ENCODE measurements at regions of chrX and their contacts with region 1.

Region 1: GRCh38 chrX:24498975-24499374 is 33.9 kb downstream of the PDK3 start:
- DNase-seq: peak; percentile 30
- H3K4me3 ChIP-seq: no peak overlapping the region
- H3K27ac ChIP-seq: no peak overlapping the region
- H3K4me1 ChIP-seq: no peaks in the 10 kb centered on the region; a peak in 1 of 4 replicates
- H3K27me3 ChIP-seq: no peaks in the 10 kb centered on the region
- CTCF ChIP-seq: peak; percentile 77
- EP300 ChIP-seq: no peak
- RAD21 ChIP-seq: peak; percentile 61

Region 2: DNA sequence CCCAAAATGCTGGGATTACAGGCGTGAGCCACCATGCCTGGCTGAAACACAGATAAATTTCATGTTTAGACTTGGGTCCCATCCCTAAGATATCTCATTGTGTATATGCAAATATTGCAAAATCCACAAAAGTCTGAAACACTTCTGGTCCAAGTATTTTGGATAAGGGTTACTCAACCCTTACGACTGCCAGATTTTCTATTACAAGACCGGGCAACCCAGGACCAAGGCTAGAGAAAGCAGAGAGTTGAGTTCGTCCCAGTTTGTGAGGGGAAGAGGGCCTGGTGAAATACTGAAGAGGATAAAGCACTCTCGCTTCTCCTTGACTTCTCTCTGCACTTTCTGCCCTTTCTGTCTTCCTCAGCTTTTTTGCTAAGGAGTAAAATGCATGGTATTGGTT is 315.0 kb before region 1 on chrX:
- CTCF ChIA-PET with region 1: no interaction called
- POLR2A ChIA-PET with region 1: no interaction called
- DNase-seq: no peak
- H3K4me3 ChIP-seq: no peak overlapping the region
- H3K27ac ChIP-seq: no peak overlapping the region
- H3K4me1 ChIP-seq: no peaks in the 10 kb centered on the region
- H3K27me3 ChIP-seq: no peaks in the 10 kb centered on the region
- CTCF ChIP-seq: no peak
- EP300 ChIP-seq: no peak
- RAD21 ChIP-seq: no peak

Region 3: GRCh38 chrX:24485976-24486680 is 12.8 kb before region 1 on chrX:
- CTCF ChIA-PET with region 1: interaction called, 14 read pairs
- POLR2A ChIA-PET with region 1: no interaction called
- DNase-seq: no peak
- H3K4me3 ChIP-seq: no peak overlapping the region
- H3K27ac ChIP-seq: no peak overlapping the region
- H3K4me1 ChIP-seq: no peaks in the 10 kb centered on the region
- H3K27me3 ChIP-seq: no peaks in the 10 kb centered on the region
- CTCF ChIP-seq: no peak
- EP300 ChIP-seq: no peak
- RAD21 ChIP-seq: no peak

Region 4: DNA sequence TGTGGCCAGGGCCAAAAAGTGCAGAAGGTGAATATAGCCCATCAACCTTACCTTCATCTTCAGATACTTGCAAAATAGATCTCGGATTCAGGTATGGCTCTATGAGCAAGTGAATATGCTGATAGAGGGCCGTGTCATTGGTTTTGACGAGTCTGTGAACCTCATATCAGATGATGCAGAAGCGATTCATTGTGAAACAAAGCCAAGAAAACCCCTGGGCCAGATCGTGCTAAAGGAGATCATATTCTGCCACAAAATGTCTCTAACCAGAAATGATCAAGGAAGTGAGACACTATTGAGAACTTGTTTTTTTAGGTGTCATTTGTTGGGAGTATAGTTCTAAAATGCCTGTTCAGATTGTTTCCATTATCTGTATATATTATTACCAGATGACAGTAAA is 14.4 kb after region 1 on chrX:
- CTCF ChIA-PET with region 1: interaction called, 10 read pairs
- POLR2A ChIA-PET with region 1: no interaction called
- DNase-seq: no peak
- H3K4me3 ChIP-seq: no peak overlapping the region
- H3K27ac ChIP-seq: no peak overlapping the region
- H3K4me1 ChIP-seq: no peaks in the 10 kb centered on the region
- H3K27me3 ChIP-seq: no peaks in the 10 kb centered on the region; the same call in 1 of the 2 replicates
- CTCF ChIP-seq: no peak
- EP300 ChIP-seq: no peak
- RAD21 ChIP-seq: no peak

Measured in SK-N-SH (cell line).